ENCODE measurements at regions of chr14 and their contacts with region 1.

Region 1: DNA sequence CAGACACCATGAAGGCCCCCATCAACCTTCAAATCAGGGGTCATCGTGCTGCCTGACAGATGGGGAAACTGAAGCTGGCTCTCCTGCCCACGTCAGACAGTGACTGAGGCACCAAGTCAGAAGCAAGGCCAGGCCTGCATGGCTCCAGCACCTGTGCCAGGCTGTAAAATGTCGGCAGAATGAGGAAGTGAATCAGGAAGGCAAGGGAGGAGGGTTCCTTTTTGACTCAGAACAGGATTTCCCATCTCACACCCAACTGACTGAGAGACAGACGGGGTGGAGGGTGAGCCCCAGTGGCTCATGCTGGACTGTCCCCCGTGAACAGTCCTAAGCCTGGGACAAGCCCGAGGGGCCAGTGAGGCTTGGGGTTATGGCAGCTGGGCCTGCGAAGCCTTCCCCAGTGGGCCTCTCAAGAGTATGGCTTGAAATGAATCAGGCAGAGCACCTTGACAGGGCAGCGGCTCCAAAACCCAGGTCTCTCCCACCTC is 20.9 kb downstream of the SYNE3 start:
- DNase-seq: peak; percentile 66
- H3K4me3 Mint-ChIP-seq: no peak overlapping the region
- H3K27ac Mint-ChIP-seq: peak overlapping the region; percentile 56
- H3K4me1 Mint-ChIP-seq: peaks cover 52% of the 10 kb centered on the region
- H3K27me3 Mint-ChIP-seq: no peaks in the 10 kb centered on the region

Region 2: DNA sequence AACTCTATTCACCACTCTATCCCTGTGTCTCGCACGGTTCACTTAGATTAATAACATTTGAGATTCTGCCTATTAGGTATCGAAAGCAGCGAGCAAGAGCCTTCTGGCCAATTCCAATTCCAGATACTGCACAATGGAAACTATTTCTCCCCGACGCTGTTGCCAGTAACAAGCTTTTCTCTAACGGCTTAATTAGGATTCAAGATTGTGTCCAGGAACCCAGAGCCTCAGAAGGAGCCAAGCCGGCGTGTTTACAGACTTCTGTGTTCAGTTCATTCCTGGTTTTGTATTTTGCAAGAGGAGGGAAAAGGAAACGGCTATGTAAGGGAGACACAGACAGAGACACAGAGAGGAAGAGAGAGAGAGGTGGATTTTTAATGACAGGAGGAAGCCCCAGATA is 523.8 kb before region 1 on chr14:
- CTCF ChIA-PET with region 1: no interaction called
- intact Hi-C with region 1: no loop called
- DNase-seq: no peak
- H3K4me3 Mint-ChIP-seq: no peak overlapping the region
- H3K27ac Mint-ChIP-seq: no peak overlapping the region
- H3K4me1 Mint-ChIP-seq: no peaks in the 10 kb centered on the region
- H3K27me3 Mint-ChIP-seq: peaks cover 15% of the 10 kb centered on the region

Region 3: GRCh38 chr14:95460647-95461478 is 34.7 kb before region 1 on chr14:
- CTCF ChIA-PET with region 1: interaction called, 4 read pairs
- intact Hi-C with region 1: loop called (anchors 1 kb)
- DNase-seq: no peak
- H3K4me3 Mint-ChIP-seq: no peak overlapping the region
- H3K27ac Mint-ChIP-seq: no peak overlapping the region
- H3K4me1 Mint-ChIP-seq: peaks cover 61% of the 10 kb centered on the region
- H3K27me3 Mint-ChIP-seq: no peaks in the 10 kb centered on the region